Mammary epithelial cell (primary cell): ENCODE measurements at regions of chr3 and their contacts with region 1.

Region 1: GRCh38 chr3:139830817-139831216 is 104.2 kb upstream of the CLSTN2 start:
- DNase-seq: no peak
- H3K4me3 ChIP-seq: no peak overlapping the region
- H3K27ac ChIP-seq: no peak overlapping the region
- H3K4me1 ChIP-seq: no peaks in the 10 kb centered on the region
- H3K27me3 ChIP-seq: peaks cover 7% of the 10 kb centered on the region
- CTCF ChIP-seq: no peak

Region 2: DNA sequence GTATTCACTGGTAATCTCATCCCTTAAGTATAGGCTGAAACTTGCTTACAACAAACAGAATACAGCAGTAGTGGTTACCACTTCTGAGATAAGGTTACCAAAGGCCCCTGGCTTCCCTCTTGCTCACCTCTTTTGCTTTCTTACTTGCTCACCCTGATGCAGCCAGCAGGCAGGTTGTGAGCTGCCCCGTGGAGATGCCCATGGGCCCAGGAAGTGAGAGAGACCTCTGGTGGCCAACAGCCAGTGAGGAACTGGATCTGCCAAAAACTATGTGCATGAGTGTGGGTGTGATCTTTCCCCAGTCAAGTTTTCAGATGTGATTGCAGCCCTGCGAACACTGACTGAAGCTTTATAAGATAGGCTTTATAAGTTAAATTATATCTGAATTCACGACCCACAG is 201.8 kb before region 1 on chr3:
- CTCF ChIA-PET with region 1: no interaction called
- dilution Hi-C with region 1: no loop called
- in situ Hi-C with region 1: no loop called
- intact Hi-C with region 1: no loop called
- DNase-seq: peak; percentile 68
- H3K4me3 ChIP-seq: no peak overlapping the region
- H3K27ac ChIP-seq: no peak overlapping the region
- H3K4me1 ChIP-seq: peaks cover 3% of the 10 kb centered on the region
- H3K27me3 ChIP-seq: no peaks in the 10 kb centered on the region
- CTCF ChIP-seq: peak; percentile 76 to 77

Region 3: GRCh38 chr3:139764936-139765335 is 65.9 kb before region 1 on chr3:
- CTCF ChIA-PET with region 1: no interaction called
- dilution Hi-C with region 1: loop called (anchors 5 kb)
- in situ Hi-C with region 1: no loop called
- intact Hi-C with region 1: no loop called
- DNase-seq: peak; percentile 76
- H3K4me3 ChIP-seq: no peak overlapping the region
- H3K27ac ChIP-seq: no peak overlapping the region
- H3K4me1 ChIP-seq: peaks cover 4% of the 10 kb centered on the region
- H3K27me3 ChIP-seq: peaks cover 2% of the 10 kb centered on the region
- CTCF ChIP-seq: no peak